ENCODE measurements at regions of chr1 and their contacts with region 1.

Region 1: DNA sequence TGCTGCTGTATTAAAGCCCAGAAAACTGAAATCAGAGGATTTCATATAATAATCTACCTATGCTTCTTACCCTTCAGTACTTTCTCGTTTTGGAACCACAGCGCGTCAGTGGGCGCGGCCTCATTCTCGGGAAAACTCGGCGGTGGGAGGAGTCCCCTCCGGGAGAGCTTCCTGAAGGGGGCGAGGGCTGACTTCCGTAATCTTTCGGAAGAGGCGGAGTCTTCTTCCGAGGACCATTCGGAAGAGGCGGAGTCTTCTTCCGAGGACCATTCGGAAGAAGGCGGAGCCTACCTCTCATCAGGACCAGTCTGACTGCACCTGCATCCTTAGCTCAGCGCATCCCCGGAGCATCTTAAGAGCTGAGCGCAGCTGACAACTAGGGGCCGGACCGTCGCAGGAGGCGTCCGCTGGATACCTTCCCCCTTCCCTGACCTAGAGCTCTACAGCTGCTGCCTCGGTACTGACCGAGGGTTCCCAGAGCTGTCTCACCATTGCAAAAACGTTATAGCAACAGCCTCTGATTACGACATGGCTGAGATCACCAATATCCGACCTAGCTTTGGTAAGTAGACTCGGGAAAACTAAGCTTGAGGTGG is at the start of gene SYT11:
- DNase-seq: peak; percentile 88 to 92
- H3K4me3 ChIP-seq: peak within 1 kb of the TSS; percentile 51; the same call in 1 of the 2 replicates
- H3K27ac ChIP-seq: peak within 1 kb of the TSS; percentile 56
- H3K4me1 ChIP-seq: peaks cover 18% of the 10 kb centered on the region
- H3K27me3 ChIP-seq: peaks cover 15% of the 10 kb centered on the region; the same call in 1 of the 2 replicates
- CTCF ChIP-seq: no peak
- total RNA-seq, gene SYT11: 0.08 and 0.09 TPM in 2 replicates

Region 2: GRCh38 chr1:155297384-155297783 is 561.9 kb before region 1 on chr1:
- CTCF ChIA-PET with region 1: no interaction called
- POLR2A ChIA-PET with region 1: interaction called, 10 read pairs
- intact Hi-C with region 1: no loop called
- DNase-seq: no peak
- H3K4me3 ChIP-seq: no peak overlapping the region
- H3K27ac ChIP-seq: no peak overlapping the region
- H3K4me1 ChIP-seq: no peaks in the 10 kb centered on the region
- H3K27me3 ChIP-seq: no peaks in the 10 kb centered on the region
- CTCF ChIP-seq: no peak

Region 3: DNA sequence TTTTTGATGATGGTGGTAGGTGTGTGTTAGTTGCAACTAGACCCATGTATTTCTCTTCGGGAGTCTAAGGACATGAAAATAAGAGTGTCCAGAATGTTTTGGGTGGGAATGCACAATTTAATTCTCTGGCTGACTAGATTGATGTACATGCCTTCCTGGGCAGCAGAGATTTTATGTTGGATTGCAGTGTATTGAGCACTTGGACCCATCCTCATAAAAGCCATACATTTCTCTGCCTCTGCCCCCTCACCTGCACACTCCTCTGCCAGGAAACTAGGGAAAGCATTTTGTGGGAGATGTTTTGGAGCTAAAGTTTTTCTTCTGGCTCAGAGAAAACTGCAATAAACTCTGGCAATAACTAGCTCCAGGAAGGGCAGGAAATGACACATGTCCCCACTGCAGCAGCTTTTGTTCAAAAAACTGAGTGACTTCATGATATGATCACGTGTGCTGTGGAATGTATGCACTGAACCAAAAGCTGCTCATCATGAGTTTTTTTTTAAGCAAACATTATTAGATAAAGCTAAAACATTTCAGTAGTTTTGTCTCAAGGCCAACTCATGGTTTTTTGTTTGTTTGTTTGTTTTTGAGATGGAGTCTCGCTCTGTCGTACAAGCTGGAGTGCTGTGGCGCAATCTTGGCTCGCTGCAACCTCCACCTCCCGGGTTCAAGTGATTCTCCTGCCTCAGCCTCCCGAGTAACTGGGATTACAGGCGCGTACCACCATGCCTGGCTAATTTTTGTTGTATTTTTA is 34.2 kb after region 1 on chr1:
- CTCF ChIA-PET with region 1: no interaction called
- POLR2A ChIA-PET with region 1: interaction called, 3 read pairs
- intact Hi-C with region 1: loop called (anchors 1 kb)
- DNase-seq: peak; percentile 44 to 87
- H3K4me3 ChIP-seq: peak overlapping the region; percentile 11; the same call in 1 of the 2 replicates
- H3K27ac ChIP-seq: peak overlapping the region; percentile 90
- H3K4me1 ChIP-seq: peaks cover 24% of the 10 kb centered on the region
- H3K27me3 ChIP-seq: no peaks in the 10 kb centered on the region
- CTCF ChIP-seq: no peak

Region 4: GRCh38 chr1:155911156-155912055 is 52.1 kb after region 1 on chr1 and contains the start of gene RIT1:
- CTCF ChIA-PET with region 1: no interaction called
- POLR2A ChIA-PET with region 1: no interaction called
- intact Hi-C with region 1: loop called (anchors 5 kb)
- DNase-seq: peak; percentile 69 to 81
- H3K4me3 ChIP-seq: peak within 1 kb of the TSS; percentile 73
- H3K27ac ChIP-seq: peak within 1 kb of the TSS; percentile 94
- H3K4me1 ChIP-seq: peaks cover 45% of the 10 kb centered on the region
- H3K27me3 ChIP-seq: no peaks in the 10 kb centered on the region
- CTCF ChIP-seq: no peak
- total RNA-seq, gene RIT1: 55.8 and 59.2 TPM in 2 replicates

Measured in PC-9 (cell line).